Calu3 (cell line): ENCODE measurements at regions of chr1 and their contacts with region 1.

Region 1: GRCh38 chr1:222813866-222814535 is 838 bp upstream of the DISP1 start:
- DNase-seq: no peak
- H3K4me3 Mint-ChIP-seq: peak overlapping the region; percentile 99
- H3K27ac Mint-ChIP-seq: peak overlapping the region; percentile 80
- H3K4me1 Mint-ChIP-seq: peaks cover 25% of the 10 kb centered on the region
- H3K27me3 Mint-ChIP-seq: no peaks in the 10 kb centered on the region
- CTCF ChIP-seq: no peak

Region 2: DNA sequence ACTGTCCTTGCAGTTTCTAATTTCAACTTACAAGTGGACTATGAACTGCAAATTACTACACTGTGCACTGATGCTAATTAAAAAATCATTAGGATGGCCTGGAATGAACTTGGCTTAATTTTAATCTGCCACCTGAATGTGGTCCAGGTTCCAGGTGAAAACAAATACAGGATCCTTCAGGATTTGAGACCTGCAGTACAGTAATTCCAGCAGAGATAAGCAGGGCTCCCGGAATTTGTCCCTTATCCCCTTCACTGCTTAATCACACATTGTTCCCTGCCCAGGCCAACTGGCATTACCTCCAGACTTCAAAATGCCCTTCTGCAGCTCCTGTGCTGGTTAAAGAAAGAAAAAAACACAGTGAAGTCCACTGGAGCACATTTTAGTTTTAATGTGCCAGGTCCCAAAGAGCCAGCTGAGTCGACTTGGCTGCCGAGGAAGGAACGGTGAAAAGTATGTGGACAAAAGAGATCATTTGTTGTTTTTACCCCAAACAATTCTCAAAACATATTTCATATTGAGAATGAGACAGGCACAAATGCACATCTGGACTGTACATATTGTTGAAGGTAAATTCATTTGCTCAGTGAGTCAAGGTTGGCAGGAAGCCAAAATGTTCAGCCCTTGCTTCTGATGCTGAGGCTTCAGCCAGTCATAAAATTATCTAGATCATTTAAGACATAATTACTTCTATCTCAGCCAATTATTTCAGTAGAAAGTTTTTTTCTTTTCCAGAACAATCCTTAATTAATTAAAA is 1397.4 kb after region 1 on chr1:
- CTCF ChIA-PET with region 1: interaction called, 11 read pairs
- intact Hi-C with region 1: no loop called
- DNase-seq: peak; percentile 61
- H3K4me3 Mint-ChIP-seq: no peak overlapping the region
- H3K27ac Mint-ChIP-seq: no peak overlapping the region
- H3K4me1 Mint-ChIP-seq: peaks cover 8% of the 10 kb centered on the region
- H3K27me3 Mint-ChIP-seq: no peaks in the 10 kb centered on the region
- CTCF ChIP-seq: no peak